Activated T-helper 1 cell treated with anti-CD3 and anti-CD28 coated beads, Interleukin-12 subunit alpha, Interleukin-12 subunit beta, Interleukin-2, Interleukin-4 antibody, amounts not matched to agents 30 ng/mL and 10 ng/mL and 1 ng/mL, durations not matched to agents 14 hours and 24 hours and 36 hours (primary cell): ENCODE measurements at regions of chr2 and their contacts with region 1.

Region 1: DNA sequence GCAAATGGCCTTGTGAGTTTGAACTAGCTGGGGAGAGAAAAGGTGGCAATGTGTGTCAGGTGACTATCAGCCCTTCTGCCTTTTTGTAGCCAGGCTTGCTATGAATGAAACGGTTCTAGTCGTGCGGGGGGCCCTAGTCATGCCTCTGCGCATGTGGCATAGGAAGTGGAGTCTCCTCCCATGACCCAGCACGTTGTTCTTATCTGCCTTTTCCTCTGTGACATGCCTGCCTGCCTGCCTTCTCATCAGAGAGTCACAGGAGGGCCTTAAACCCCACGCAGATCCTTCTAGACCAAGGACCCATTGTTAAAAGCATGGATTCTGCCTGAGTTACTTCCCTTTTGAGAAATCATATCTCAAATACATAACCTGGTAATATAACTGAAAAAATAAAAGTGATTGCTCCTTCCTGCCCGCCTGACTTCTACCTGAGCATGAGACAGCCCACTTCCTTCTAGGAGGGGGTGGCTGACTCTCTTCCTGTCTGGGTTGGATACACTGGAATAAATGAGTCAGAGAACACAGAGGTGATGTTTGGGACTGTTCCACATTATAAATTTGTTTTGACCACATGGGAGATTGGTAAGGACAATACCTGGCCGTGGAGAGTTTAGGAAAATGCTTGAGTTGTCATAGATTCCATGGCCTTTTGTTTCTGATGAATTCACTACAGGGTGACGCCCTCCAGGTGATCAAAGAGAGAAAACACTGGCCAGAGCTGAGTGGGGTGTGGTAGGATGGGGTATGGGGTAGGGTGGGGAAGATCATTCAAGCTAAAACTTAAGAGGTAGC is 49.8 kb downstream of the FBLN7 start:
- DNase-seq: peak; percentile 69
- H3K4me3 Mint-ChIP-seq: peak overlapping the region; percentile 45
- H3K27ac Mint-ChIP-seq: peak overlapping the region; percentile 94
- H3K4me1 Mint-ChIP-seq: peaks cover 71% of the 10 kb centered on the region
- H3K27me3 Mint-ChIP-seq: no peaks in the 10 kb centered on the region

Region 2: DNA sequence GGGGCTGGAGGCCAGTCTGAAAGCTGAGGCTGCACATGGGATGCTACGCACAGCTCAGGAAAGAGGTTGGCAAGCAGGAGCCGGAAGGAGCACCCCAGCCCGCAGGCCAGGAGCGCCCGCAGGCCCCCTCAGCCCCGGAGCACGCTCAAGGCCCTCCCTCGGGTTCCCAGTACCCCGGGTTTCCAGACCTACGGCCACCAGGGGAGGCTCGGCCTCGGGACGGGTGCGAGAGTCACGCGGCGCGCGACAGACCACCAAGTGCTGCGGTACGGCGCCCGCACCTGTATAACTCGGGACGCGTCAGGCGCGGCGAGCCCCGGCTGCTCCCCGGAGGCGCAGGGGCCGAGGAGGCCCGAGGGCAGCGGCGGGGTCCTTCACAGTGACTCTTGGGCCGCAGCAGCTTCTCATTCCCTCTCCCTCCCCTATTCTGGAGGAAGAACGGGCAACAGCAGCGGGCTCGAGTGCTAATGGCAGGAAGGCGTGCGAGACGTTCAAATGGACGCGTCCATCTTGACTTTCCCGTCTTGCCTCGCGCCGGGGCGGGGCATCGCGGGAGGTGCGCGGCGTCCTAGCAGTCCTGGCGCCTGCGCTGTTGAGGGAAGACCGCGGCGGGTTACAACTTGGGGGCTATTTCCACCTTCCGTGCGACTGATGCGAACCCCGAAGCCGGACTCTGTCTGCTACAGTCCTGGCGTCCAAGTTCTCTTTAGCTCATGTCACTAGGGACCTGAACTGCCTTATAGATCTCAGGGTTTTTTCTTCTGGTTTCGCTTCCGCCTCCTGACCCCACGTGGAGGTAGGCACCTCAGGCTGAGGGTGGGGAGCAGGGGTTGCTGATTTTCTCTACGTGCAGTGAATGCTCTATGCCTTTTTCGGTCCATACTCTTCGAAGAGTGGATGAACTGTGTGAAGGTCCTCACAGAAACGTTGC is 304.1 kb before region 1 on chr2 and contains the start of gene ANAPC1:
- intact Hi-C with region 1: loop called (anchors 10 kb)
- DNase-seq: peak; percentile 84
- H3K4me3 Mint-ChIP-seq: peak within 1 kb of the TSS; percentile 95
- H3K27ac Mint-ChIP-seq: peak within 1 kb of the TSS; percentile 93
- H3K4me1 Mint-ChIP-seq: no peaks in the 10 kb centered on the region
- H3K27me3 Mint-ChIP-seq: peaks cover 4% of the 10 kb centered on the region
- total RNA-seq, gene ANAPC1: 120 and 126 TPM in 2 replicates

Region 3: GRCh38 chr2:112121682-112122254 is 66.2 kb before region 1 on chr2:
- intact Hi-C with region 1: loop called (anchors 2 kb)
- DNase-seq: peak; percentile 30
- H3K4me3 Mint-ChIP-seq: no peak overlapping the region
- H3K27ac Mint-ChIP-seq: no peak overlapping the region
- H3K4me1 Mint-ChIP-seq: no peaks in the 10 kb centered on the region
- H3K27me3 Mint-ChIP-seq: no peaks in the 10 kb centered on the region

Region 4: DNA sequence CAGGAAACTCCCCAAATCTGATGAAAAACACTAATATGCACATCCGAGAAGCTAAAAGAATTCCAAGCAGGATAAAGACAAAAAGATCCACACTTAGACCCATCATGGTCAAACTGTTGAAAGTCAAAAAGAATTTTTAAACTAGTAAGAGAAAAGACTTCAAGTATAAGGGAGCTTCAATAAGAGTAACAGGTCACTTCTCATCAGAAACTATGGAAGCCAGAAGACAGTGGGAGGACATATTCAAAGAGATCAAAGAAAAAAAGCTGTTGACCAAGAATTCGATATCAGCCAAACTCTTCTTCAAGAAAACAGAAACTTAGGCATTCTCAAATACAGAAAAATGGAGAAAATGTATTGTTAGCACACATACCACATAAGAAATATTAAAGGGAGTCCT is 16.4 kb after region 1 on chr2:
- intact Hi-C with region 1: loop called (anchors 2 kb)
- DNase-seq: no peak
- H3K4me3 Mint-ChIP-seq: no peak overlapping the region
- H3K27ac Mint-ChIP-seq: no peak overlapping the region
- H3K4me1 Mint-ChIP-seq: peaks cover 9% of the 10 kb centered on the region
- H3K27me3 Mint-ChIP-seq: no peaks in the 10 kb centered on the region

Region 5: GRCh38 chr2:112275306-112275886 is 87.4 kb after region 1 on chr2 and contains the start of gene ZC3H6:
- intact Hi-C with region 1: loop called (anchors 2 kb)
- DNase-seq: peak; percentile 99
- H3K4me3 Mint-ChIP-seq: peak within 1 kb of the TSS; percentile 91
- H3K27ac Mint-ChIP-seq: peak within 1 kb of the TSS; percentile 97
- H3K4me1 Mint-ChIP-seq: peaks cover 13% of the 10 kb centered on the region
- H3K27me3 Mint-ChIP-seq: peaks cover 2% of the 10 kb centered on the region
- total RNA-seq, gene ZC3H6: 3.3 and 4.3 TPM in 2 replicates

Region 6: GRCh38 chr2:112465382-112465781 is 277.4 kb after region 1 on chr2:
- intact Hi-C with region 1: no loop called
- DNase-seq: no peak
- H3K4me3 Mint-ChIP-seq: no peak overlapping the region
- H3K27ac Mint-ChIP-seq: no peak overlapping the region
- H3K4me1 Mint-ChIP-seq: no peaks in the 10 kb centered on the region
- H3K27me3 Mint-ChIP-seq: peaks cover 46% of the 10 kb centered on the region

Region 7: DNA sequence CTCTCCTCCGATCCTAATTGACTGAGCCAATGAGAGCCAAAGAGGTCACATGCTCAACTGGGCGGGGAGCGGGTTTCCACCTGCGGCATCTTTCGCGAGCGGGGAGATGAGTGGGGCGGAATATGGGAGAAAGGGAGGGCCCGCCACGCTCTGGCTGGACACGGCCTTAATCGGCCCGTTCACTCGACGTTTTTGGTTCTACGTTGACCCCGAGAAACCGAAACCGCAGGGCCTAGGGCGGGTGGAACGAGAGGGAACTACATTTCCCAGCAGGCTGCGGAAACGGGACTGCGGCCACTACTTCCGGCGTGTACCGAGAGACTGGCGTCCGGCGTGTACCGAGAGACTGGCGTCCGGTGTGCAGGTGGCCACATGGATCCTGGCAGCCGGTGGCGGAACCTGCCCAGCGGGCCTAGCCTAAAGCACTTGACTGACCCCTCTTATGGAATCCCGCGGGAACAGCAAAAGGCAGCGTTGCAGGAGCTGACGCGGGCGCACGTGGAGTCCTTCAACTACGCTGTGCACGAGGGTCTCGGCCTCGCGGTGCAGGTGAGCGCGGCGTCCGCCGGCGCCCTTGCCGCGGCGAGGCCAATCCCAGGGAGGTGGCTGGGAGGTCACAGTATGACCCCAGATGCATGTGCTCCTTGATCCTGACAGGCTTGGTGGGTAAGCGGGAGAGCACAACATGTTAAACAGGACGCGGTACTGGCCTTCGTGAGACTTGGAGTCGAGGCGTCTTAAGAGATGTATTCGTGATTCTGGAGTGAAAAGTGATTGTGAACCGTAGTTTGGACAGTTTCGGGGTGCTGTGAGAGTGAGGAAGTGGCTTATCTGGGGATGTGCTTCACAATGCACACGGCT is 354.4 kb after region 1 on chr2 and contains the start of gene POLR1B:
- intact Hi-C with region 1: loop called (anchors 5 kb)
- DNase-seq: peak; percentile 77
- H3K4me3 Mint-ChIP-seq: no peak within 1 kb of the TSS
- H3K27ac Mint-ChIP-seq: no peak within 1 kb of the TSS
- H3K4me1 Mint-ChIP-seq: peaks cover 11% of the 10 kb centered on the region
- H3K27me3 Mint-ChIP-seq: no peaks in the 10 kb centered on the region
- total RNA-seq, gene POLR1B: 75.6 and 78.4 TPM in 2 replicates